H1 (cell line): ENCODE measurements at regions of chr17 and their contacts with region 1.

Region 1: GRCh38 chr17:79789534-79790353 is 7.1 kb downstream of the CBX8 start:
- DNase-seq: peak in 1 of 2 experiments; percentile 83
- H3K4me3 ChIP-seq: peak overlapping the region; percentile 18 to 62 (median 29); a peak in 7 of 8 replicates
- H3K27ac ChIP-seq: no peak overlapping the region
- H3K4me1 ChIP-seq: peaks cover 7 to 43% (median 30%) of the 10 kb centered on the region in 4 experiments
- H3K27me3 ChIP-seq: peaks cover 41 to 67% (median 61%) of the 10 kb centered on the region in 4 experiments
- CTCF ChIP-seq: peak; percentile 66 to 75 (median 73)
- EP300 ChIP-seq: no peak
- POLR2A ChIP-seq: no peak
- RAD21 ChIP-seq: peak; percentile 68 to 75

Region 2: DNA sequence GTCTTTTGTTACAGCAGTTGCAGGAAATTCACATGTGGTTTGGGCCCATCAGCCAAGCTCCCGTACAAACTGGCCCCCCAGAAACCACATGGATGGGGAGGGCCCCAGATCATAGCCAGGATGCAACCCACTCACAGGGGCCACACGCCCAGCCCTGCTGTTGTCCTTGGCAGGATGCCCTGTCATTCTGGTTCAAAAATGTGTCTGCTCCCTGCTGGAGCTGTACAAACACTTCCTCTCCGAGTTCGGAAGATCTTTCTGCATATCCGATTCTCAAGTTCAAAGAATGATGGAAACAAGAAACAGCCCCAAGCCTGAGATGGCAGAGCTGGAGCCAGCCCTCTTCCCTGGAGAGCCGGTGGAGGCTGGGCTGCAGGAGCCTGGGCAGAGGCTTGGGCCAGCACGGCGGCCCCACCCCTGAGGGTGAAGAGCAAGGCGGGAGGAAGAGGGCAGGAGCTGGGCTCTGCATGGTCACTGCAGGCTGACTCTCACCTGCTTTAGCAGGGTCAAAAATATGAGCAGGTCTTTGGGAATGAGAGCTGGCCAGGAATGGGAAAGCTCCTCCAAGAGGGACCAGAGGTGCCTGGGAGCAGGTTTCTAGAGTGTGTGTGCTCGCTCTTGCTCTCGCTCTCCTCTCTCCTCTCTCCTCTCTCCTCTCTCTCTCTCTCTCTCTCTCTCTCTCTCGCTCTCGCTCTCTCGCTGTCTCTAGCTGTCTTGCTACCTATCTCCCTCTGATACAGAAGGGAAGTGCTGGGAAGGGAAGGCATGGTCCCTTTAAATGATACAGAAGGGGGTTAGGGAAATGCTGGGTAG is 93.7 kb before region 1 on chr17:
- CTCF ChIA-PET with region 1: no interaction called
- POLR2A ChIA-PET with region 1: no interaction called
- DNase-seq: no peak
- H3K4me3 ChIP-seq: no peak overlapping the region
- H3K27ac ChIP-seq: no peak overlapping the region
- H3K4me1 ChIP-seq: peaks cover 3 to 33% (median 20%) of the 10 kb centered on the region in 4 experiments
- H3K27me3 ChIP-seq: peaks cover 0 to 7% (median 0%) of the 10 kb centered on the region in 4 experiments; a peak in 3 of 7 replicates
- CTCF ChIP-seq: no peak
- EP300 ChIP-seq: no peak
- POLR2A ChIP-seq: no peak
- RAD21 ChIP-seq: no peak

Region 3: DNA sequence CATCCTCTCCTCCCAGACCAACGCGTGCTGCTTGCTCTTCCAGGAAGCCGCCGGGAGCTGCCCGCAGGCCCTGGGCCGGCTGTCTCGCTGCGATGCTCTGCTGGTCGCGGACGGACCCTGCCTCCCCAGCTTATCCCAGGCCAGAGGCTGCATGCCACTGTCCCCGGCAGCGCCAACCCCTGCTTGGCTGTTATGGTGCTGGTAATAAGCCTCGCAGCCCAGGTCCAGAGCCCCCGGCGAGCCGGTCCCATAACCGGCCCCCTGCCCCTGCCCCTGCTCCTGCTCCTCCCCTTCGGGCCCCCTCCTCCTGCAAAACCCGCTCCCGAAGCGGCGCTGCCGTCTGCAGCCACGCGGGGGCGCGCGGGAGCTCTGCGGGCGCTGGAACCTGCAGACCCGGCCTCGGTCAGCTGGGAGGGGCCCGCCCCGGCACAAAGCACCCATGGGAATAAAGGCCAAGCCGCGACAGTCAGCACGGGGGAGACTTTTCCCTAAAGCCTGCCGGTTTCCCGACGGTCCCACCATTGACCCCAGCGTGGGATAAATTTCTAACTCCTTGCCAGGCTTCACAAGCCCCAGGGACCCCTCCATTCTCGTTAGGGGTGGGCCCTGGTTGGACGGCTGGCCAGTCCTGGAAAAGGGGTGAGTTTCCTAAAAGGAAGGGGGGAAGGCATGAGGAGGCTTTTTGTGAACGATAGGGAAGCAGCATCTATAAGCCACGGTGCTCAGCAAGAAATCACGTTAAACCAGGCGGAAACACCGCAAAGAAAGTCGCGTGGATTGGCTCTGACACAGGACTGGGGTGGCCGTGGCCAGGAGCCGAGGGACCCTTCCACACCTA is 47.8 kb before region 1 on chr17:
- CTCF ChIA-PET with region 1: interaction called, 88 read pairs
- POLR2A ChIA-PET with region 1: interaction called, 20 read pairs
- DNase-seq: peak; percentile 49 to 99
- H3K4me3 ChIP-seq: peak overlapping the region; percentile 35 to 72 (median 58)
- H3K27ac ChIP-seq: no peak overlapping the region
- H3K4me1 ChIP-seq: peaks cover 4 to 15% (median 8%) of the 10 kb centered on the region in 4 experiments; a peak in 6 of 7 replicates
- H3K27me3 ChIP-seq: peaks cover 0 to 31% (median 26%) of the 10 kb centered on the region in 4 experiments; a peak in 6 of 7 replicates
- CTCF ChIP-seq: peak; percentile 84 to 94 (median 92)
- EP300 ChIP-seq: no peak
- POLR2A ChIP-seq: no peak
- RAD21 ChIP-seq: peak; percentile 57 to 75

Region 4: GRCh38 chr17:79747508-79748295 is 42.0 kb before region 1 on chr17:
- CTCF ChIA-PET with region 1: interaction called, 88 read pairs
- POLR2A ChIA-PET with region 1: interaction called, 20 read pairs
- DNase-seq: no peak
- H3K4me3 ChIP-seq: peak overlapping the region; percentile 17 to 62 (median 36)
- H3K27ac ChIP-seq: no peak overlapping the region
- H3K4me1 ChIP-seq: peaks cover 4 to 24% (median 15%) of the 10 kb centered on the region in 4 experiments
- H3K27me3 ChIP-seq: peaks cover 19 to 47% (median 35%) of the 10 kb centered on the region in 4 experiments
- CTCF ChIP-seq: no peak
- EP300 ChIP-seq: no peak
- POLR2A ChIP-seq: no peak
- RAD21 ChIP-seq: no peak

Region 5: DNA sequence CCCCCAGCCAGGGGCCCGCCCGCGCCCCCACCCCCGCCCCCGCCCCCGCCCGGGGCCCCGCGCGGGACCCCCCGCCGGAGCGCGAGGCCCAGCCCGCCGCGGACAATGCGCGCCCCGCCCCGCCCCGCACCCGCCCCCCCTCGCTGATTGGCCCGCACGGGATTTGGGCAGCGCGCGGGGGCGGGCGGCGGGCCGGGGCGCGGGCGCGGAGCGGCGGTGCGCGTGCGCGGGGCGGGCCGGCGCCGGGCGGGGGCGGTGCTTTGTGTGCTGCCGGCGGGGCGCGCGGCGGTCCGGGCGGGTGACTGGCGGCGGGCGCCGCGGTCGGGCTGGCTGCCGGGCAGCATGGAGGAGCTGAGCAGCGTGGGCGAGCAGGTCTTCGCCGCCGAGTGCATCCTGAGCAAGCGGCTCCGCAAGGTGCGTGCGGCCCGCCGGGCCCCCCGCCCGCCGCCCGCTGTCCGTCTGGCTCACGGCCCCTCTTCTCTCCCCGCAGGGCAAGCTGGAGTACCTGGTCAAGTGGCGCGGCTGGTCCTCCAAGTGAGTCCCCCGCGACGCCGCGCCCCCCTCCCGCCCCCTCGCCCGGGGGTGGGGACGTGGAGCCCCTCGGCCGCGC is 11.7 kb before region 1 on chr17 and contains the start of gene CBX2:
- CTCF ChIA-PET with region 1: interaction called, 13 read pairs
- POLR2A ChIA-PET with region 1: interaction called, 33 read pairs
- DNase-seq: peak in 1 of 2 experiments; percentile 85
- H3K4me3 ChIP-seq: peak within 1 kb of the TSS; percentile 57 to 97 (median 83)
- H3K27ac ChIP-seq: peak within 1 kb of the TSS; percentile 85
- H3K4me1 ChIP-seq: peaks cover 4 to 19% (median 15%) of the 10 kb centered on the region in 4 experiments
- H3K27me3 ChIP-seq: no peaks in the 10 kb centered on the region; a peak in 1 of 7 replicates
- CTCF ChIP-seq: no peak
- EP300 ChIP-seq: no peak
- POLR2A ChIP-seq: peak; percentile 63 to 85
- RAD21 ChIP-seq: no peak
- total RNA-seq, gene CBX2: 83.9 and 85.9 TPM in 2 replicates

Region 6: GRCh38 chr17:79803997-79804855 is 14.5 kb after region 1 on chr17:
- CTCF ChIA-PET with region 1: interaction called, 33 read pairs
- POLR2A ChIA-PET with region 1: interaction called, 9 read pairs
- DNase-seq: peak in 1 of 2 experiments; percentile 70
- H3K4me3 ChIP-seq: peak overlapping the region in 3 of 4 experiments; percentile 2 to 42 (median 10); a peak in 3 of 8 replicates
- H3K27ac ChIP-seq: no peak overlapping the region
- H3K4me1 ChIP-seq: peaks cover 4 to 56% (median 43%) of the 10 kb centered on the region in 4 experiments
- H3K27me3 ChIP-seq: peaks cover 93 to 100% (median 99%) of the 10 kb centered on the region in 4 experiments
- CTCF ChIP-seq: no peak
- EP300 ChIP-seq: no peak
- POLR2A ChIP-seq: no peak
- RAD21 ChIP-seq: no peak

Region 7: DNA sequence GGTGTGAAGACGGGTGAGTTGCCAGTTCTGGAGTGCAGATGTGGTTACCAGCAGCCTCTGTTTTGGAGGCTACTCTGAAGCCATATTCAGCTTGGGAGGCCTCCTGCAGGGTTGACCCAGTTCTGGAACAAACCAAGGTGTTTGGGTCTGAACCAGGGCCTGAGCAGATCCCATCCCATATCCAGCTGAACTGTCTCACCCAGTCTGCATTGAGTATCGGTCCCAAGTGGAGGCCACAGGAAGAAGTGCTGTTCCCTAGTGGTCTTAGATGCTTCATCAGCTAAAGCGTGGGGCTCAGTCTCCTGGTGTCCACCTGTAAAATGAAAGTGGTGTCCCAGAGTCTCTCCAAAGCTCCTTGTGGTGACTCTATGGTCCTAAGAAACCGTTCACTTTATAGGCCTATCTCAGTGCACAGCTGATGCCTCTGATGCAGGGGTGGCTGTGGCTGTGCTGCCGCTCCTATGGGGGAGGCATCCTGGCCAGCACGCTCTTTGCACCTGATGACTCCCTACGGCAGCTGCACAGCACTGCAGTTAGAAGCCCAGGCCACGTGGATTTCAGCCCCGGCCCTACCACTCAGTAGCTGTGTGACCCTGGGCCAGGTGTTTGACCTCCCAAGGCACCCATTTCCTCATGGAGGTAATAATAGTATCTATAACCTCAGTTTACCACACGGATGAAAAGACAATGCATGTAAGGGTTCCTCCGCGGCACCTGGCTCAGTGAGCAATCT is 28.4 kb after region 1 on chr17:
- CTCF ChIA-PET with region 1: interaction called, 10 read pairs
- POLR2A ChIA-PET with region 1: interaction called, 5 read pairs
- DNase-seq: no peak
- H3K4me3 ChIP-seq: no peak overlapping the region
- H3K27ac ChIP-seq: no peak overlapping the region
- H3K4me1 ChIP-seq: peaks cover 0 to 17% (median 10%) of the 10 kb centered on the region in 4 experiments; a peak in 6 of 7 replicates
- H3K27me3 ChIP-seq: peaks cover 60 to 90% (median 79%) of the 10 kb centered on the region in 4 experiments
- CTCF ChIP-seq: no peak
- EP300 ChIP-seq: no peak
- POLR2A ChIP-seq: no peak
- RAD21 ChIP-seq: no peak

Region 8: GRCh38 chr17:79826204-79826680 is 36.5 kb after region 1 on chr17:
- CTCF ChIA-PET with region 1: interaction called, 10 read pairs
- POLR2A ChIA-PET with region 1: interaction called, 4 read pairs
- DNase-seq: no peak
- H3K4me3 ChIP-seq: no peak overlapping the region
- H3K27ac ChIP-seq: no peak overlapping the region
- H3K4me1 ChIP-seq: peaks cover 0 to 16% (median 2%) of the 10 kb centered on the region in 4 experiments; a peak in 4 of 7 replicates
- H3K27me3 ChIP-seq: peaks cover 20 to 75% (median 57%) of the 10 kb centered on the region in 4 experiments
- CTCF ChIP-seq: no peak
- EP300 ChIP-seq: no peak
- POLR2A ChIP-seq: no peak
- RAD21 ChIP-seq: no peak